Heart right ventricle (tissue), 16 donors: ENCODE measurements at regions of chr17 and their contacts with region 1.

Region 1: DNA sequence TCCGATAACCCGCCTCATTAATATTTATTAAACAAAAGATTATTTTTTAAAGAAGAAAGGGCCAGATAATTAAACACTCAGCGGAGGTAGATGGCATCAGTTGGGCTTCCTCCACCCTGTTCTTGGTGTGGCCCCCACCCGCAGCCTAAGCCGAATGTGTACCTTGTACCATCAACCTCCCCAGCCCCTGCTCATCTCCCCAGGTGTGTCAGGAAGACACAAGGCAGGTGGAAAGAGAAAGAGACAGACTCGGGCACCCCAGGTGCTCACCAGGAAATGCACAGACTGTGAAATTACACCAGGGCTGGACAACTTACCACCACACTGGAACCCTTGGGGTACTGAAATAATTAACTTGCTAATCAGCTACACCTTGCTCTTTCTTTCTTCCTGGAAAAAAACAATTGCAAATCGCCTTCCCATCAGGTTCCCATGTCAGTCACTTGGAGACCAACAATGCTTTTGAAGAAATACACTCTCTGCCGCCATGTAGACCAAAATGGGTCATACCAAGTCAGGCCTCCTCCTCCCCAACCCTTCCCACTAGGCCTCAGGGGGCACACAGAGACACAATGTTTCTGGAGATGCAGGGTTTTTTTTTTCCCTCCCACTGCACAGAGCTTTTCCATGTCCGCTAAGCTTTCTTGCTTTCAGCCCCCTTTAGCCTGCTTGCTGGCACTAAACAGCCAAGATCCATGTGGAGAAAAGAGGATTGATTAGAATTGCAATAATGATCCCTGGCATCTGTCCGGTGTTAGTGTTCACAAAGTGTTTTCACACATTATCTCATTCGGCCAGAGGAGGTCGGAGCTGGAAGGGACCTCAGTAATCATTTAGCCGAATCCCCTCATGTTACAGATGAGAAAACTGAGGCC is 8.6 kb upstream of the LHX1 start:
- DNase-seq: no peak
- ATAC-seq: no peak
- H3K4me3 ChIP-seq: peak overlapping the region in 1 of 10 donors; percentile 26
- H3K27ac ChIP-seq: no peak overlapping the region
- H3K4me1 ChIP-seq: peaks cover 1 to 30% (median 22%) of the 10 kb centered on the region in 9 donors
- H3K27me3 ChIP-seq: peaks cover 34 to 100% (median 92%) of the 10 kb centered on the region in 7 donors
- CTCF ChIP-seq: no peak

Region 2: GRCh38 chr17:36867716-36868341 is 60.9 kb before region 1 on chr17:
- intact Hi-C with region 1: loop called in 1 of 10 experiments (anchors 2 kb)
- DNase-seq: no peak
- ATAC-seq: no peak
- H3K4me3 ChIP-seq: no peak overlapping the region
- H3K27ac ChIP-seq: no peak overlapping the region
- H3K4me1 ChIP-seq: no peaks in the 10 kb centered on the region
- H3K27me3 ChIP-seq: peaks cover 0 to 82% (median 46%) of the 10 kb centered on the region in 7 donors
- CTCF ChIP-seq: no peak

Region 3: DNA sequence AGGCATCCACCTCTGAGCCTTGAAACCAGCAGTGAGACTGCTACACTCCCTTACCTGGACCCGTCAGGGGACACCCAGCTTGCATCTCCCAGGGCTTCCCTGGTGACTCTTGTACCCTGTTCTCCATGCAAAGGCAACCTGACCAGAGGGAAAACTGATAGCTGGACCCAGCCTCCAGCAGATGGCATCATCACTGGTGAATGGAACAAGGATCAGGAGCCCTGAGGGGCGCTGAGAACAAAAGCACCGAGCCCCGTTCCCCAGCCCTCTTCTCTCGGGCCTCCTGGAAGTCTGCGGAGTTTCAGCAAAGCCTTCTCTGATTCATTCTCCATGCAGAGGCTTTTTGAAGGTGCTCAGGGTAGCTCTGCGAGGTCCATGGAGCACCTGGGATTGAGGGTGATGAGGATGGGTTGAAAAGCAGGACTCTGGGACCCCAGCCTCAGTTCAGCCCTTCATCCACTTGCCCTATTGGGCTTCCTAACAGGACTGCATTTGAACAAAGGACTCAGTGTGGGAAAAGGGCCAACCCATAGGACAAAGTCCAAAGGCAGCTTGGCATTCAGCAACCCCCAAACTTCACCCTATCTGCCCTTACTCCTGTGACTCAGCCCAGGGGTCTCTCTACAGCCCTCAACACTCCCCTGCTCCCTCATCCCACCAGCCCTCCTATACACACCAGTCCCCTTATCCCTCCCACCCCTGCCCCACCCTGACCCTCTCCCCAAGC is 36.4 kb before region 1 on chr17:
- intact Hi-C with region 1: loop called in 1 of 10 experiments (anchors 5 kb)
- DNase-seq: no peak
- ATAC-seq: no peak
- H3K4me3 ChIP-seq: no peak overlapping the region
- H3K27ac ChIP-seq: no peak overlapping the region
- H3K4me1 ChIP-seq: no peaks in the 10 kb centered on the region
- H3K27me3 ChIP-seq: peaks cover 0 to 60% (median 47%) of the 10 kb centered on the region in 7 donors
- CTCF ChIP-seq: no peak

Region 4: DNA sequence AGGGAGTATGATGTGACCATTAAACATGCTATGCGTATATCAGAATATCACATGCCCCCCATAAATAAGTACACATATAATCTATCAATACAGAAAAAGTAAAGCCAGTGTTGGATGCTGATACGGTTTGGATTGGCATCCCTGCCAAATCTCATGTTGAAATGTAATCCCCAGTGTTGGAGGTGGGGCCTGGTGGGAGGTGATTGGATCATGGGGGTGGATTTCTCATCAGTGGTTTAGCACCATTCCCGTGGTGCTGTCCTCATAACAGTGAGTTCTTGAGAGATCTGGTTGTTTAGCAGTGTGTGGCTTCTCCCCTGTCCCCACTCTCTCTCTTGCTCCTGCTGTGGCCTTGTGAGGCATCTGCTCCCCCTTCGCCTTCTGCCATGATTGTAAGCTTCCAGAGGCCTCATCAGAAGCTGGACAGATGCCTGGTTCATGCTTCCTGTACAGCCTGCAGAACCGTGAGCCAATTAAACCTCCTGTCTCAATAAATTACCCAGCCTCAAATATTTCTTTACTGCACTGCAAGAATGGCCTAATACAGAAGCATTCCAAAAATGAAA is 109.0 kb after region 1 on chr17:
- intact Hi-C with region 1: no loop called
- DNase-seq: no peak
- ATAC-seq: no peak
- H3K4me3 ChIP-seq: no peak overlapping the region
- H3K27ac ChIP-seq: no peak overlapping the region
- H3K4me1 ChIP-seq: no peaks in the 10 kb centered on the region
- H3K27me3 ChIP-seq: no peaks in the 10 kb centered on the region
- CTCF ChIP-seq: no peak